GM10248 (cell line): ENCODE measurements at regions of chr19 and their contacts with region 1.

Region 1: DNA sequence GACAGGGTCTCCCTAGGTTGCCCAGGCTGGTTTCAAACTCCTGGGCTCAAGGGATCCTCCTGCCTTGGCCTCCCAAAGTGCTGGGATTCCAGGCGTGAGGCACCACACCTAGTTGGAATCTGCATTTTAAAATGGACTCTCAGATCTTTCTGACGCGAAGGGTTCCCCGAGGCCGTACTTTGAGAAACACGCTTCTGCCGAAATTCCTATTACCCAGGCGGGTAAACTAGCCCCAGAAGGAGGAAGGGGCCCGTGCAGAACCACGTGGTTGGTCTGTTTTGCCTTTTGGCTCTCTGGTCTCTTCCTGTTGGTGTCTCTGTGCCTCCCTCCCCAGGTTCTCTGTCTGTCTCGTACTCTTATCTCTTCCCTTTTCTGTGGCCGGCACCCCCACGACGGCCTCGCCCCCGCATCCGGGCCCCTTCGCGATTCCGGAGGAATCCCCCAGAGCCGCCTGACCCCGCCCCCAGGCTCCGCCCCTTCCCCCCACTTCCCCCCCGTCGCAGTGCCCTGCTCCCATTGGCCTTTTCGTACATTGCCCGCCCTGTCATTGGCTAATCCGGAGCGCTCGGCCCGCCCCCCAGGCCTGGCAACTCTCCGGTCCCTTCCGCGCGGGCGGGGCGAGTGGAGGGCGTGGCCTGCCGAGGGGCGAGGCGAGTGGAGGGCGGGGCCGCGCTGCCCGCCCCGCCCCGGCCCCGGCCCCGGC is at the start of gene TNFAIP8L1:
- DNase-seq: peak; percentile 100
- CTCF ChIP-seq: no peak

Region 2: DNA sequence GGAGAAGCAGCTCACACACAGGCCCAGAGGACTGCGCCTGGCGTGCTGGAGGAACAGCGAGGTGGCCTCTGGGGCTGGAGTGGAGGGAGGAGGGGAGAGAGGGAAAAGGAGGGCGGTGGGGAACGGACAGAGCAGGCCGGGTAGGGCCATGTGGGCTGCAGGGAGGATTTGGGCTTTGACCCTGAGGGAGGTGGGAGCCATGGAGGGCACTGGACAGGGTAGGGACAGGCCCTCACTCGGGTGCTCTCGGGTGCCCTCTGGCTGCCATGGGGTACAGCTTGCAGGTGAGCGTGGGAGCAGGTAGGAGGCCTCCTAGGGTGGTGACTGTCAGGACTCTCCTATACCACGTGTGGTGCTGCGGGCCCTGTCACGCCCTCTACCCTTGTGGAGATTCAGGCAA is 143.5 kb before region 1 on chr19:
- CTCF ChIA-PET with region 1: no interaction called
- POLR2A ChIA-PET with region 1: no interaction called
- DNase-seq: no peak
- CTCF ChIP-seq: peak; percentile 44

Region 3: DNA sequence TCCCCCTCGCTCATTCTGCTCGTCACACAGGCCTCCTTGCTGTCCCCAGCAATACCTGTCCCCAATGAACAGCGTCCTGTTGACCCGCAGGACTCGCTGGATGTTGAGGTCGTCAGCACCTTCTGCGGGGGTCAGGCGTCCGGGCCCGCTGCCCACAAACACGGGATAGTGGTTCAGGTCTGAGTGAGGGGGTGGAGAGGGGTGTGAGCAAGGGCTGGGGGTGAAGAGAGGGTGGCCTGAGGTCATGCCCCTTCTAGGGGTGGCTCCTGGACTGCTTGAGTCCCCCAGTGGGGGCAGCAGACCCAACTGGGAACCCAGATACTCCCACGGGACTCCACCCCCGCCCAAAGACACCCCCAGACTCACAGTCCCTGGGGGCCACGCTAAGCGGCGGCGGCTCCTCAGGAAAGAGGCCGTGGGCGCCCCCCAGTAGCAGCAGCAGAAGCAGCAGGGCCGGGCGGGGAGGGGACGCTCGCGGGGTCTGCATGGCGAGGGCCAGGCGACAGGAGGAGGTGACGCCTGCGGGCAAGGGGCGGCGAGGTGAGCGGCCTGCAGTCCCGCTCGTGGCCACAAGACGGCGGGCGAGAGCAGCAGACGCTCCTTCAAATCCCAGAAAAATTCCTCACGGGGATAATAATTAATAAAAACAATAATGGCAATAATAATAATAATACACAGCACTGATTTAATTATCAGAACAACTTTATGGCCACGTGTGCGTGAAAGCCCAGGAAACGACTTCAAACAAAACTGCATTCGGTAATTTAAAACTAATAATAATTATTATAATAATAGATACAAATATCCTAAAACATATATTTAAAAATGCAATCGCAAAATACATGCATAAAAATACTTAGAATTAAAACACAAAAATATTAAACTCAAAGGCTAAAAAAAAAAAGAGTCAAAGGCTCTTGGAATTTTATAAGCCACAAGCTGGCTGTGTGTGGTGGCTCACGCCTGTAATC is 80.7 kb before region 1 on chr19:
- CTCF ChIA-PET with region 1: interaction called, 10 read pairs
- POLR2A ChIA-PET with region 1: no interaction called
- DNase-seq: peak; percentile 72
- CTCF ChIP-seq: peak; percentile 95

Region 4: GRCh38 chr19:4576016-4576933 is 62.7 kb before region 1 on chr19:
- CTCF ChIA-PET with region 1: interaction called, 102 read pairs
- POLR2A ChIA-PET with region 1: no interaction called
- DNase-seq: peak; percentile 75
- CTCF ChIP-seq: peak; percentile 75

Region 5: GRCh38 chr19:4589579-4590410 is 49.2 kb before region 1 on chr19:
- CTCF ChIA-PET with region 1: interaction called, 34 read pairs
- POLR2A ChIA-PET with region 1: no interaction called
- DNase-seq: peak; percentile 70
- CTCF ChIP-seq: peak; percentile 50

Region 6: DNA sequence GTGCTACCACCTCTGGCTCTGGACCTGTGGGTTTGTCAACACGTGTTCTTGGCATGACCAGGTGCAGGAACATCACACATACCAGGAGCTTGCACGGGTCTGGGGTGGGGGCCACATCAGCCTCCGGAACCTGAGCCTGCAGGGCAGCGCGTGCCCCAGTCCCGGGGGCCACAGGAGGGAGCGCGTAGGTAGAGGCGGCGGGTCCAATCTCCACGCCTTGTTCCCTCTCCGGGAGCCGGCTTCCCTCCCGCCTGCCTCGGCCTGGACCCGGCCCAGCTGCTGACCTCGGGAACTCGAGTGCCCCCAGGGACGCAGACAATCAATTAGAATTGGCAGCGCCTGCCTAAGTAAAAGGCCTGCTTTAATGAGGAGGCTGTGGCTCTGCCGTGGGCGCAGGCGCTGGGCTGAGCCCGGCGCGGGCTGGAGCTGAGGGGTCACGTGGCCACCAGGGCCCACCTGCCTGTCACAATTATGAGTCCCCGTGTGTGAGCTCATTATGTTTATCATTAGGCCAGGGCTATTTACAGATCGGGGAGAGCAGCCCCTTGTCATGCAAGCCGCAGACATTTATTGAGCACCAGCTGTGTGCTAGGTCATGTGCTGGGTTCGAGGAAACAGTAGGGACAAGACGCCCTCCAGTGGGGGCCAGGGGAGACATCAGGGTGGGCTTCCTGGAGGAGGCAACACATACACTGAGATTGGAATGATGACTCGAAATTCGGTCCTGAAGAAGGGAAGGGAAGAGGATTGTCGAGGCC is 31.9 kb before region 1 on chr19:
- CTCF ChIA-PET with region 1: interaction called, 14 read pairs
- POLR2A ChIA-PET with region 1: no interaction called
- DNase-seq: no peak
- CTCF ChIP-seq: no peak

Region 7: GRCh38 chr19:4660181-4660791 is 21.3 kb after region 1 on chr19:
- CTCF ChIA-PET with region 1: interaction called, 11 read pairs
- POLR2A ChIA-PET with region 1: no interaction called
- DNase-seq: peak; percentile 48
- CTCF ChIP-seq: peak; percentile 53

Region 8: GRCh38 chr19:4759388-4760284 is 120.7 kb after region 1 on chr19:
- CTCF ChIA-PET with region 1: no interaction called
- POLR2A ChIA-PET with region 1: no interaction called
- DNase-seq: peak; percentile 99
- CTCF ChIP-seq: no peak